HAP-1 (cell line): ENCODE measurements at regions of chr5 and their contacts with region 1.

Region 1: DNA sequence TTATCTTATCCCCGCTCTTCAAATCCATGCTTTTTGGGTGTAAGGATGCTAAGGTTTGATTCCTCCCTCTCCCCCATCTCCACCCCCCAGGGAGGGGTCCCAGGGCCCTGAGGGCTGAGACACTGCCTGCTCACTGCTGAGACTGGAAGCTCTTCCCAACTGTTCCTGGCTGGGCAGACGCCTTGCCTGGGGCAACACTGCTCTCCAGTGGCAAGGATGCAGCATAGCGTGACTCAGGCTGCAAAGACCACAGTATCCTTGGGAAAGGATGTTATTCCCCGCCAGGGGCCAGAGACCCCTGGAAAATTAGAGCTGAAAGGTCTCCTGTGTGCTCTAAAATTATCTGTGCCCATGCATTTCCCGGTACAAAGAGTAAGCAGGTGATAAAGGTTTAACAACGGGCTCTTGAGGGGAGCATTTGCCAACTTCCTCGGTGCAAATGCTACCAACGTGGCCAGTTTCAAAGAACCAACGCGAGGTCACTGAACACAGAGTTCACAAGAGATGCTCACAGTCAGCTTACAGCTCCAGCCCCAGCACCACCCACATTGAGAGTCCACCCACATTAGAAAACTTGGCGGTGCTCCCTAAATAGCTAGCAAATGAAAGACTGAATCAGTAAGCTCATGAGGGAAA is 271.9 kb downstream of the NSG2 start:
- DNase-seq: peak; percentile 51 to 69
- H3K4me3 ChIP-seq: no peak overlapping the region
- H3K4me1 ChIP-seq: no peaks in the 10 kb centered on the region
- H3K27me3 ChIP-seq: 0 out of 2 replicates have a peak, but pooled peaks cover 5% of the 10 kb centered on the region

Region 2: DNA sequence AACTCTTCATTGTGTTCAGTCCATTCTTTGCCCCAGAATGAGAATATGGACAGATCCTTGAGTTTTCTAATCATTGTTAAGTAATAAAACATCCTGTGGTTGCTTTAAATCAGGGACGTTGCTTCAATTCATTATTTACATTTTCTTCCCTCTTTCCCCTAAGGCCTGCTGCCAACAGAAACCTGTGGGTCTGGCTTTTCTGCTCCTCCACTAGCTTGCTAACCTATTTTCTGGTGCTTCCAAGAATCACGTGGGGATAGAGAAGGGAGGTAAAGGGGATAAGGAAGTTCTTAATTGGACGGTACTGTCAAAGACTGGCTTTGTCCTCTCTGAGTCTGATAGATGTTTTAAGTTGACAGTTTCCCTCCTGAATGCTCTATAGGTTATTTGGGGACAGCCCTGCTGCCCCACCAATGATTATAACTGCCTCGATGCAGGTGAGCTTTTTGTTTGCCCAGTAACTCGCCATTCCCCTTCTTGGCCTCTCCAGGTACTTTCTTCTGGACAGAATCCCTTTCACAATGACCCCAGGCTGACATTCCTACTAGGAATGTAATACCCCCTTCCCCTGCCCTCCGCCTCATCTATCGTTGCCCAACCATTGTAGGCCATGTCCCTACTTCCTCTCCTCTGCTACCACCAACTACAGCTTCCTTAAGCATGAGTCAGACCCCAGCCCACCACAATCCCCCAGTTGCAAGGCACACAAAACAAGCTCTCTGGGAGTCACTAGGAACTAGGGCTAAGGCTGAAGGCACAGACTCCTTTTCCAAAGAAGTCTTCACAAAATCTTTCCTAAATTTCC is 449.1 kb before region 1 on chr5:
- in situ Hi-C with region 1: no loop called
- DNase-seq: no peak
- H3K4me3 ChIP-seq: no peak overlapping the region
- H3K4me1 ChIP-seq: no peaks in the 10 kb centered on the region
- H3K27me3 ChIP-seq: no peaks in the 10 kb centered on the region

Region 3: GRCh38 chr5:174045470-174046025 is 271.8 kb before region 1 on chr5 and contains the start of gene NSG2:
- in situ Hi-C with region 1: loop called (anchors 5 kb)
- DNase-seq: peak; percentile 83 to 86
- H3K4me3 ChIP-seq: no peak within 1 kb of the TSS
- H3K4me1 ChIP-seq: no peaks in the 10 kb centered on the region
- H3K27me3 ChIP-seq: no peaks in the 10 kb centered on the region

Region 4: DNA sequence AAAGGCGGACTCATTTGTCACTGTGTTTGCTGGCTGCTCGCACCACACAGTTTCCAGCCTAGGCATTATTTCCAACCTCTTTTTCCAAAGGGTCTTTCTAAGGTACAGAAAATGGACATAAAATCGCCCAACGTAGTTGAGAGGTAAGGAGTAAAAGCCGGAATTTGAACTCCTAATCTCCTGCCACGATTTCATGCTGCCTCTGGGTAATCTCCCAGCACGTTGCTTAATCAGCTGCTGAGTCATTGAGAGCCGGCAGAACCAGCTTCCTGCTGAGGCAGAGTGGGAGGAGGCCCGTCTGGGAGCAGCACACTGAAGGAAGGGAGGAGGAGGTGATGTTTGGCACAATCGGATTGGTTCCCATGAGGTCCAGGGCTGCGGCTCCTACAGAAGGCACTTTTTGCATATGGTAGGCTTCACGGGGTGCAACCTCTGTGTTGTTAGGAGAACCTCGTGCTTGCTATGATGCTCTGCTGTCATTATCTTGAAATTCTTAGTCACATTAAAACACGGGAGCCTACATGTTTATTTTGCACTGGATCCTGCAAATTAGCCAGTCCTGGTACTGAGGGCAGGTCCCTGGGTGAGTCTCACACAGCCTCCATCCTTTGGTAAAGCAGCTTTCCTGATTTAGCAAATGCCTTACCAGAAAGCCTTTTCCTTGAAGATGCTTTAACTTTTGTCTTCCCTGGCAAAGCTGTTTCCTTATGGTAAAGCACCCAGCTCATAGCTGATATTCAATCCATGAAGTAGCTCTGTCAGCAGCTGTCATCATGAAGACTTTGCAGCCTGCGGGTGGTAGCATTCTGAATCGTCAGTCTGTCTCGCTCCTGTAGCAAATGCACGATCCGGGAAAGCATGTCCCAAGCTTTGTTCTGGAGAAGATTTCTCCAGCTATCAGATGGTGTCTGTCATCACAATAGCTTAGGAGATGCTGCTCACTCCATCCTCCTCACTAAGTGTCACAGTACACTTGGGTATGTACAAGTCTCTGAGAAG is 215.4 kb after region 1 on chr5:
- in situ Hi-C with region 1: no loop called
- DNase-seq: peak; percentile 20 to 58
- H3K4me3 ChIP-seq: no peak overlapping the region
- H3K4me1 ChIP-seq: peaks cover 6% of the 10 kb centered on the region
- H3K27me3 ChIP-seq: no peaks in the 10 kb centered on the region

Region 5: GRCh38 chr5:174625591-174626350 is 308.4 kb after region 1 on chr5:
- in situ Hi-C with region 1: no loop called
- DNase-seq: peak; percentile 82 to 98
- H3K4me3 ChIP-seq: no peak overlapping the region
- H3K4me1 ChIP-seq: peaks cover 43% of the 10 kb centered on the region
- H3K27me3 ChIP-seq: no peaks in the 10 kb centered on the region